OCI-LY7 (cell line): ENCODE measurements at regions of chr18 and their contacts with region 1.

Region 1: DNA sequence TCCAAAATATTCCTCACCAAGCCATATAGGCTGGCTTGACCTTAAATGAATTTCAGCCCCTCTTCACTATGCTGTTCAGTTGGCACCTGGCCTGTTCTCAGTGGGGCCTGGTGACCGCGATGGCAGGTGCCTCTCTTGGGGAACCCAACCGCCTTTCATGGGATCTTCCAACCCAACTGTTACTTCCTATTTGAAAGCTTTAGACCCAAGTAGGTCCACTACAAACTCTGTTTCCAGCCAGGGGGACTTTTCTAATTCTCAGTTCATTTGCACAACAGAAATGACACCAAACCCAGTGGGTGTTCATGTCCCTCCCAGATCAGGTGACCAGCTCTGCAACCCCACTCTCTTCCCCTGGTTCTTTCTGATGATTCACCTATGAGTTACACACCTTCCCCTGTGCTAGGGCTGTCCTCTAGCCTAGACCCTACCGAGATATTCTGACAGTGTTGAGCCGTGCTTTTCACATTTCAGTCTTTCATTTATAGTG is 35.6 kb upstream of the NDUFV2 start:
- DNase-seq: peak; percentile 87
- H3K4me3 ChIP-seq: peak overlapping the region; percentile 30
- H3K27ac ChIP-seq: peak overlapping the region; percentile 94
- H3K4me1 ChIP-seq: peaks cover 86% of the 10 kb centered on the region
- CTCF ChIP-seq: no peak

Region 2: DNA sequence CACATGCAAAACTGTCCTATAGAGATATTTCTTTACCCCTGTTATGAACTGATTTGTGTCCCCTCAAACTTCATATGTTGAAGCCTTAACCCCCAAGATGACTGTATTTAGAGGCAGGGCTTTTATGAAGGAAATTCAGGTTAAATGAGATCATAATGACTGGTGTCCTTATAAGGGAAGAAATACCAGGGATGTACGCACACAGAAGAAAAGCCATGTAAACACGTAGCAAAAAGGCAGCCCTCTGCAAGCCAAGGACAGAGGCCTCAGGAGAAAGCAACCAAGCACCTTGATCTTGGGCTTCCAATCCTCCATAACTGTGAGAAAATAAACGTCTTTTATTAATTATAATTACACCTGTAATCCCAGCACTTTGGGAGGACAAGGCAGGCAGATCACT is 65.7 kb before region 1 on chr18:
- CTCF ChIA-PET with region 1: no interaction called
- POLR2A ChIA-PET with region 1: no interaction called
- intact Hi-C with region 1: loop called (anchors 2 kb)
- DNase-seq: no peak
- H3K4me3 ChIP-seq: no peak overlapping the region
- H3K27ac ChIP-seq: no peak overlapping the region
- H3K4me1 ChIP-seq: peaks cover 8% of the 10 kb centered on the region
- CTCF ChIP-seq: no peak

Region 3: GRCh38 chr18:9334329-9334972 is 267.6 kb after region 1 on chr18 and contains the start of gene TWSG1:
- CTCF ChIA-PET with region 1: interaction called, 10 read pairs
- POLR2A ChIA-PET with region 1: no interaction called
- intact Hi-C with region 1: loop called (anchors 2 kb)
- DNase-seq: peak; percentile 96
- H3K4me3 ChIP-seq: peak within 1 kb of the TSS; percentile 96
- H3K27ac ChIP-seq: no peak within 1 kb of the TSS
- H3K4me1 ChIP-seq: peaks cover 8% of the 10 kb centered on the region
- CTCF ChIP-seq: peak; percentile 32; the same call in 1 of the 2 replicates
- total RNA-seq, gene TWSG1: 7.4 and 7.5 TPM in 2 replicates